HEK293 (cell line): ENCODE measurements at regions of chr14 and their contacts with region 1.

Region 1: GRCh38 chr14:50321009-50321660 is 9.0 kb downstream of the DMAC2L start:
- H3K4me3 ChIP-seq: peak overlapping the region; percentile 33
- H3K27ac ChIP-seq: peak overlapping the region; percentile 66
- H3K4me1 ChIP-seq: peaks cover 3% of the 10 kb centered on the region; the same call in 1 of the 2 replicates
- CTCF ChIP-seq: peak; percentile 59; the same call in 1 of the 2 replicates

Region 2: DNA sequence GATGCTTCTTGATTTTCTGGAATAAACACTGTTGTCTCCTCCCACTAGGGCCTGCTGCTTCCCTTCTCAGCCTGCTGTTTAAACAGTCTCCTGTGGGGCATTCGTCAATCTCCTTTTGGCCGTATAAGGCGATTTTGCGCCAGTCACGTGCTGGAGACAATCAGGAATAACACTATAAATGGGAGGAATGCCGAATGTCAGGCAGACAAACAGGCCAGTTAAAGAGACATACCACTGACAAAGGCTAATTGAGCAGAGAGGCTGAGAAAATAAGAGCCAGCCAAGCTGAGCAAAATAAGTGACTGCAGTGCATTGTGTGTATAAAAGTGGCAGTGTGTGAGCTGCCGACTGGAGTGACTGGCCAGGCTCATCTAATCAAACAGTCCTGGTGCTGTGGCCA is 14.3 kb after region 1 on chr14:
- CTCF ChIA-PET with region 1: interaction called, 13 read pairs
- POLR2A ChIA-PET with region 1: no interaction called
- H3K4me3 ChIP-seq: no peak overlapping the region
- H3K27ac ChIP-seq: no peak overlapping the region
- H3K4me1 ChIP-seq: no peaks in the 10 kb centered on the region; the same call in 1 of the 2 replicates
- CTCF ChIP-seq: no peak